Endothelial cell of umbilical vein (primary cell): ENCODE measurements at regions of chr22 and their contacts with region 1.

Region 1: DNA sequence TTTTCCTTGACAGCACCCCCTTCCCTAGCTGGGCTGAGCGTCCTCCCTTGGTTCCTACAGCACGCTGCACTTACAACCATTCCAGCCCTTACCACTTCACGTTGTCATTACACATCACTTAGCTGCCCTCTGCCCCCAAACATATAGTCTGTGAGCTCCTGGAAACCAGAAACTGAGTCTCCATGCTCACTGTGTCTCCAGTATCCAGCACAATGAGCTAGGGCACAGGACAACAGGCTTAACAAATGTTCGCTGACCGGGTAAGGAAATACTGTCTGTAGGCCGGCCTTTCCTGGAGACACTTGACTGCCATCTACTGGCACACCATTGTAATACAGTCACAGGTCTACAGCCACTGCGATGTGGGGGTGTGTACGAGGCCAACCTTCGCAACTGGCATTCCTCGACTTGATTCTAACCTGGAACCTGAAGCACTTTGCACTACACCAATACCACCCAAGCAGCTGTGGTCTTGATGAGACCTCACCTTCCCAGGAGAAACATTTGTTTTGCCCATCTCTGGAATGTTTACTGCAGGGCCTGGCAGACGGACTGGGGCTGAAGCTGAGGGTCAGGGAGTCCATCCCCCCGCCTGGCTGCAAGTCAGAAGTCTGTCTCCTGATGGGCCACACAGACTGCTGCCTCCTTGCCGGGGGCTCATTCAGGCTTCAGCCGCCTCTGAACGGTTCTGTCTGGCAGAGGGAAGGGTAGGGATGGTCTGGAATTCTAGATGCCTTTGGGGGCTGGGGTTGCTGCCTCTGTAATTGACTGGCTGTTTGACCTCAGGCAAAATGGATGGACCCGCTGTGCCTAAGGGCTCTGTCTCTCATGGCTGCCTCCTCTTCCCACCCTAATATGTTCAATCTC is 72.0 kb downstream of the SYN3 start:
- DNase-seq: peak; percentile 8
- H3K4me3 ChIP-seq: no peak overlapping the region
- H3K27ac ChIP-seq: no peak overlapping the region
- H3K4me1 ChIP-seq: no peaks in the 10 kb centered on the region
- H3K27me3 ChIP-seq: no peaks in the 10 kb centered on the region
- CTCF ChIP-seq: peak; percentile 47 to 54
- POLR2A ChIP-seq: no peak

Region 2: DNA sequence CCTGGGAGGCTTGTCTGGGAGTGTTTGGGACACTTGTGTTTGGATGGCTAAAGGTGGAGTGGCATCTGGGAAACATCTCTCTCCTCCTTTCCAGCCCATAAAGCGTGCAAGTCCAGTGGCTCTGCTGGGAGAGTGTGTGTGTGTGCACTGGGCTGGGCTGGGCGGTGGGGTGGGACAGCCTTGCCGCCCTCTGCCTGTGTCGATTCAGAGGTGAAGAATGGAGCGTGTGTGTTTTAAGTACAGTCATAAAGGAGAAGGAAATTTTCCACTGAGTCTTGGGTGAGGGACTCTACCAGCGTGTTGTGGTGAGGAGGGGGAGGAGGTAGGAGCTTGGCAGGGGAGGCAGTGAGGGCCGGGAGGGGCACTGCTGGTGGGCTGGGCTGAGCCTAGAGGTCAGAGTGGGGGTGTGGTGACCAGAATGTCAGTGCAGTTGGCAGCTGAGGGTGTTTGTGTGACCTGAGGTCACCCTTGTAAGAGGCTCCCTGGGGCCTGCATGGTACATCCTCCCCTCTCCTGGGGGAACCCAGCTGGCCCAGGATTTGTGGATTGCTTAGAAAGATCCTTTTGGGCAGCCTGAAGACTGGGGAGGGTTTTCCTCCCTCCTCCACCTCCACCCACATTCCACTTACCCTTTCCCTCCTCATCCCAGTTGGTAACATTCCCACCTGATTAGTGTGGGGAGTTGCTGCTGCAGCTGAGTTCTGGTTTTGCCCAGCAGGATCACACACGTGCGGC is 182.9 kb before region 1 on chr22:
- CTCF ChIA-PET with region 1: no interaction called
- POLR2A ChIA-PET with region 1: no interaction called
- dilution Hi-C with region 1: no loop called
- intact Hi-C with region 1: loop called (anchors 2 kb)
- DNase-seq: no peak
- H3K4me3 ChIP-seq: no peak overlapping the region
- H3K27ac ChIP-seq: no peak overlapping the region
- H3K4me1 ChIP-seq: no peaks in the 10 kb centered on the region
- H3K27me3 ChIP-seq: peaks cover 9 to 12% of the 10 kb centered on the region in 2 experiments
- CTCF ChIP-seq: no peak
- POLR2A ChIP-seq: no peak

Region 3: GRCh38 chr22:32926600-32926999 is 59.5 kb before region 1 on chr22:
- CTCF ChIA-PET with region 1: no interaction called
- POLR2A ChIA-PET with region 1: no interaction called
- dilution Hi-C with region 1: no loop called
- intact Hi-C with region 1: loop called (anchors 1 kb)
- DNase-seq: no peak
- H3K4me3 ChIP-seq: no peak overlapping the region
- H3K27ac ChIP-seq: no peak overlapping the region
- H3K4me1 ChIP-seq: no peaks in the 10 kb centered on the region
- H3K27me3 ChIP-seq: no peaks in the 10 kb centered on the region
- CTCF ChIP-seq: no peak
- POLR2A ChIP-seq: no peak

Region 4: GRCh38 chr22:33380789-33381530 is 394.8 kb after region 1 on chr22:
- CTCF ChIA-PET with region 1: no interaction called
- POLR2A ChIA-PET with region 1: no interaction called
- dilution Hi-C with region 1: no loop called
- intact Hi-C with region 1: no loop called
- DNase-seq: no peak
- H3K4me3 ChIP-seq: no peak overlapping the region
- H3K27ac ChIP-seq: no peak overlapping the region
- H3K4me1 ChIP-seq: no peaks in the 10 kb centered on the region
- H3K27me3 ChIP-seq: no peaks in the 10 kb centered on the region
- CTCF ChIP-seq: no peak
- POLR2A ChIP-seq: no peak